Keratinocyte (primary cell): ENCODE measurements at regions of chr6 and their contacts with region 1.

Region 1: DNA sequence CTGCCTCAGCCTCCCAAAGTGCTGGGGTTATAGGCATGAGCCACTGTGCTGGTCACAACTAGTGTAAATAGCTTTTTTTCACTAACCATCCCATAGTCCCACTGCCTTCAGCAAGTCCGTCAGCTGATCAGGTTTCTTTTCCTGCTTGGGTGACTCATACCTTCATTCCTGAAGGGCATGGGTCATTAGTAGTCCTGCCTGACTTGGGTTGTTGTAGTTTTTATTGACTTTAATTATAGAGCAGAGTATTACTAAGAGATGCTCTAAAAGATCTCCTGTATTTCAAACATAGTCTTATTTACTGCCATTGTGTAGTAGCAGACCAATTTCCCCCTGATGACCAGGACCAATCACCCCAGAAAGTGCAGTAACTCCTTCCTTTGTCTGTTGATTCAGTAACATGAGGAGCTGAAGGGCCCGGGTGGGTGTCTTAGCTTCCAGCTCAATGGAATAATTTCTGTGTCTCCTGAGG is 25.8 kb downstream of the HLA-C start:
- DNase-seq: peak; percentile 40
- H3K4me3 ChIP-seq: no peak overlapping the region
- H3K27ac ChIP-seq: no peak overlapping the region
- H3K4me1 ChIP-seq: peaks cover 18% of the 10 kb centered on the region
- H3K27me3 ChIP-seq: peaks cover 14% of the 10 kb centered on the region
- CTCF ChIP-seq: no peak

Region 2: DNA sequence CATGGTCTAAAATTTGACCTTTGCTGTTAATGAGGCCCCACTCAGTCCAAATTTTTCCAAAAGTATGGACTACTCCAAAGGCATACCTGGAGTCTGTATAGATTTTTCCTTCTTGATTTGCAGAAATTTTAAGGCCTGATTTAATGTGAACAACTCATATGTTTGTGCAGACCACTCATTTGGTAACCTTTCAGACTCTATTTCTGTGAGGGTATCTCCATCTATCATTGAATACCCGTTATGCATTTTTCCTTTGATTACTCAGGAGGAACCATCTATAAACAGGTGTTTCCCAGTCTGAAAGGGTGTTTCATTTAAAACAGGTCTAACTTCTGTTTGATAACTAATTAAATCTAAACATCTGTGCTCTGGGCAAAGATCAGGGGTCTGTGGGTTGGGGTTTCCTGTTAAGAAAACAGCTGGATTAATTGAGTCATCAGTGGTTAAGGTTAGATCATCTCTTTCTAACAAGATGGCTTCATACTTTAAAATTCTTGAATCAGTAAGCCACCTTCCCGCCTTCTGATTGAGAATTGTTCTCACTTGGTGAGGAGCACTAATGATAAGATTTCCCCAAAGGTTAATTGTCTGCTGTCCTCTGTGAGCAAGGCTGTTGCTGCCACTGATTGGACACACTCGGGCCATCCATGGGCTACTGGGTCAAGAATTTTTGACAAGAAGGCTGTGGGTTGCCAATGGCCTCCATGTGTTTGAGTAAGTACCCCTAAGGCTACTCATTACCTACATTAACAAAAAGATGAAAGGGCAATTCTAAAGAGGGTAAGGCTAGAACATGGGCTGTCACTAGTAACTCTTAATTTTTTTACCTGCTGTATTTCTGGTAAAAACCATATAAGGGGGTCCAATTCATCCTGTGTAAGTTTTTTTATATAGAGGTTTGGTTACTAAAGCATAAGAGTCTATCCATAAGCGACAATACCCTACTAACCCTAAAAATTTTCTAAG is 86.8 kb after region 1 on chr6:
- dilution Hi-C with region 1: loop called (anchors 25 kb)
- DNase-seq: no peak
- H3K4me3 ChIP-seq: no peak overlapping the region
- H3K27ac ChIP-seq: no peak overlapping the region
- H3K4me1 ChIP-seq: no peaks in the 10 kb centered on the region
- H3K27me3 ChIP-seq: no peaks in the 10 kb centered on the region
- CTCF ChIP-seq: no peak